ENCODE measurements at regions of chr12 and their contacts with region 1.

Region 1: GRCh38 chr12:71746983-71747611 is 7.6 kb upstream of the RAB21 start:
- DNase-seq: peak in 8 of 9 donors; percentile 28 to 70 (median 56)
- ATAC-seq: peak; percentile 95
- H3K4me3 ChIP-seq: no peak overlapping the region
- H3K4me3 Mint-ChIP-seq: no peak overlapping the region
- H3K27ac ChIP-seq: no peak overlapping the region
- H3K27ac Mint-ChIP-seq: peak overlapping the region in 1 of 9 donors; percentile 51
- H3K4me1 ChIP-seq: no peaks in the 10 kb centered on the region
- H3K4me1 Mint-ChIP-seq: peaks cover 0 to 3% (median 0%) of the 10 kb centered on the region in 7 donors
- H3K27me3 ChIP-seq: no peaks in the 10 kb centered on the region
- H3K27me3 Mint-ChIP-seq: peaks cover 5 to 48% (median 15%) of the 10 kb centered on the region in 5 donors

Region 2: GRCh38 chr12:70590051-70590450 is 1157.0 kb before region 1 on chr12:
- CTCF ChIA-PET with region 1: interaction called, 4 read pairs
- POLR2A ChIA-PET with region 1: no interaction called
- intact Hi-C with region 1: loop called in 1 of 2 experiments (anchors 5 kb)
- DNase-seq: peak; percentile 7 to 45 (median 22)
- ATAC-seq: peak; percentile 67
- H3K4me3 ChIP-seq: no peak overlapping the region
- H3K4me3 Mint-ChIP-seq: no peak overlapping the region
- H3K27ac ChIP-seq: no peak overlapping the region
- H3K27ac Mint-ChIP-seq: no peak overlapping the region
- H3K4me1 ChIP-seq: no peaks in the 10 kb centered on the region
- H3K4me1 Mint-ChIP-seq: peaks cover 0 to 6% (median 0%) of the 10 kb centered on the region in 7 donors
- H3K27me3 ChIP-seq: peaks cover 4 to 6% of the 10 kb centered on the region in 2 donors
- H3K27me3 Mint-ChIP-seq: peaks cover 3 to 43% (median 24%) of the 10 kb centered on the region in 5 donors

Region 3: GRCh38 chr12:71216725-71217579 is 530.1 kb before region 1 on chr12:
- CTCF ChIA-PET with region 1: no interaction called
- POLR2A ChIA-PET with region 1: no interaction called
- intact Hi-C with region 1: loop called in 1 of 2 experiments (anchors 2 kb)
- DNase-seq: no peak
- ATAC-seq: no peak
- H3K4me3 ChIP-seq: no peak overlapping the region
- H3K4me3 Mint-ChIP-seq: no peak overlapping the region
- H3K27ac ChIP-seq: no peak overlapping the region
- H3K27ac Mint-ChIP-seq: no peak overlapping the region
- H3K4me1 ChIP-seq: no peaks in the 10 kb centered on the region
- H3K4me1 Mint-ChIP-seq: no peaks in the 10 kb centered on the region
- H3K27me3 ChIP-seq: no peaks in the 10 kb centered on the region
- H3K27me3 Mint-ChIP-seq: peaks cover 0 to 12% (median 4%) of the 10 kb centered on the region in 5 donors

Region 4: GRCh38 chr12:71636704-71637115 is 110.4 kb before region 1 on chr12:
- CTCF ChIA-PET with region 1: interaction called, 19 read pairs
- POLR2A ChIA-PET with region 1: interaction called, 5 read pairs
- intact Hi-C with region 1: loop called (anchors 1 kb)
- DNase-seq: peak in 7 of 9 donors; percentile 27 to 65 (median 58)
- ATAC-seq: peak; percentile 84
- H3K4me3 ChIP-seq: no peak overlapping the region
- H3K4me3 Mint-ChIP-seq: no peak overlapping the region
- H3K27ac ChIP-seq: no peak overlapping the region
- H3K27ac Mint-ChIP-seq: peak overlapping the region in 8 of 9 donors; percentile 8 to 91 (median 59)
- H3K4me1 ChIP-seq: no peaks in the 10 kb centered on the region
- H3K4me1 Mint-ChIP-seq: peaks cover 0 to 18% (median 12%) of the 10 kb centered on the region in 7 donors
- H3K27me3 ChIP-seq: no peaks in the 10 kb centered on the region
- H3K27me3 Mint-ChIP-seq: no peaks in the 10 kb centered on the region

Region 5: GRCh38 chr12:71685914-71686665 is 61.0 kb before region 1 on chr12 and contains the start of gene TMEM19:
- CTCF ChIA-PET with region 1: interaction called, 10 read pairs
- POLR2A ChIA-PET with region 1: interaction called, 3 read pairs
- intact Hi-C with region 1: loop called (anchors 1 to 2 kb)
- DNase-seq: peak; percentile 78 to 88 (median 86)
- ATAC-seq: peak; percentile 90
- H3K4me3 ChIP-seq: peak within 1 kb of the TSS; percentile 96
- H3K4me3 Mint-ChIP-seq: peak within 1 kb of the TSS; percentile 85 to 99 (median 94)
- H3K27ac ChIP-seq: peak within 1 kb of the TSS; percentile 87
- H3K27ac Mint-ChIP-seq: peak within 1 kb of the TSS; percentile 85 to 97 (median 91)
- H3K4me1 ChIP-seq: peaks cover 21 to 23% of the 10 kb centered on the region in 2 donors
- H3K4me1 Mint-ChIP-seq: peaks cover 15 to 55% (median 38%) of the 10 kb centered on the region in 7 donors
- H3K27me3 ChIP-seq: no peaks in the 10 kb centered on the region
- H3K27me3 Mint-ChIP-seq: no peaks in the 10 kb centered on the region
- total RNA-seq, gene TMEM19: 13.9 to 17.7 (median 14.7) TPM

Region 6: DNA sequence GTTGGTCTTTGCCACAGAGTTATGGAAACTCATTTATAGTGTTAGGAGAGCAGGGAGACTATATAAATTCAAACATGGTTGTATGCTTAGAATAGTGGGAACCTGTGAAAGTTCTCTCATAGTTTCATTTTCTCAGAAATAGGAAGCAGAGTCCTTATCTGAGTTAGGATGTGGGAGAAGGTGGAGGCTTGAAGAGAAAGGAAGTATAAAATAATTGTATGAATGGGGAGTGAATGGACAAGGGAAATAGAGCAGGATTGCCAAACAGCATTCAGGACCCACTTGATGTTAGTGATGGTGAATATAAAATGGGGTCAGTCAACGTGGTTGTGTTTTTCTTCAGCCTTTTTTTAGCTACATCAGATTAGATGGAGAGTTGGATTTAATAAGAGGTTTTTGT is 157.5 kb after region 1 on chr12:
- CTCF ChIA-PET with region 1: no interaction called
- POLR2A ChIA-PET with region 1: no interaction called
- intact Hi-C with region 1: no loop called
- DNase-seq: no peak
- ATAC-seq: no peak
- H3K4me3 ChIP-seq: no peak overlapping the region
- H3K4me3 Mint-ChIP-seq: peak overlapping the region in 1 of 10 donors; percentile 0
- H3K27ac ChIP-seq: no peak overlapping the region
- H3K27ac Mint-ChIP-seq: peak overlapping the region in 5 of 9 donors; percentile 1 to 38 (median 15)
- H3K4me1 ChIP-seq: no peaks in the 10 kb centered on the region
- H3K4me1 Mint-ChIP-seq: peaks cover 0 to 17% (median 9%) of the 10 kb centered on the region in 7 donors
- H3K27me3 ChIP-seq: no peaks in the 10 kb centered on the region
- H3K27me3 Mint-ChIP-seq: no peaks in the 10 kb centered on the region

Measured in naive thymus-derived CD4-positive, alpha-beta T cell (primary cell).